ACHN (cell line): ENCODE measurements at regions of chr7 and their contacts with region 1.

Region 1: DNA sequence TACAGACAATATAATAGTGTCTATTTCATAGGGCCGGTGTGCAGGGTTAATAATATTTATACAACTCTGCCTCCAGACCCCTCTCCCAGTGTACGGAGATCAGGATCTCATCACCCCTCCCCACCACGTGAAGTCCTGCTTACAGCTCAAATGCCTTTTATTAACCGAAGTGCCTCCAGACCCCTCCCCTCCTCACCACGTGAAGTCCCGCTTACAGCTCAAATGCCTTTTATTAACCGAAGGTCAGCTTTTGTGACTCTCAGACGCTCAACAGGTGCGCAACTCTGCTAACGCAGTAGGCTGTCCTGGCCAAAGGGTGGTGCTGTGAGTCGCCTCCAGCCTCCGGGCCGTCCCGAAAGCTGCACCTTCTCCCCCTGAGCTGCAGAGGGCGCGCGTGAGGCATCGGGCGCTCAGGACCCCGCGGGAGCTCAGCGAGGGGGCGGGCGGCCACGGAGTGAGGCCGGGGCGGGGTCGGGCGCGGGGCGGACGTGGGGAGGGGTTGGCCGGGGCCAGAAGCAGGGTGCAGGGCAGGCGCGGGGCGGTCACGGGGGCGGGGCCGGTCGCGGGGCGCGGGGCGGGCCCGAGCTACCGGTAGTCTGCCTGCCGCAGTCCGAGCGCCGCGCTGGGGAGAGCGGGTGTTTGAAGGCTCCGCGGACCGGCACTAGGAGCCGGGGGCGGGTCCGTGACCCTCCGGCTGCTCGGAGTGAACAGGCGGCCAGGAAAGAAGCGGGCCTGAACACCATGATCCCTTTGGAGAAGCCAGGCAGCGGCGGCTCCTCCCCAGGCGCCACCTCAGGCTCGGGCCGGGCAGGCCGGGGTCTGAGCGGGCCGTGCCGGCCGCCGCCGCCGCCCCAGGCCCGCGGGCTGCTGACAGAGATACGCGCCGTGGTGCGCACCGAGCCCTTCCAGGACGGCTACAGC is at the start of gene STK17A:
- DNase-seq: peak; percentile 95

Region 2: GRCh38 chr7:43700059-43700501 is 117.3 kb after region 1 on chr7:
- in situ Hi-C with region 1: loop called (anchors 25 kb)
- DNase-seq: peak; percentile 83

Region 3: DNA sequence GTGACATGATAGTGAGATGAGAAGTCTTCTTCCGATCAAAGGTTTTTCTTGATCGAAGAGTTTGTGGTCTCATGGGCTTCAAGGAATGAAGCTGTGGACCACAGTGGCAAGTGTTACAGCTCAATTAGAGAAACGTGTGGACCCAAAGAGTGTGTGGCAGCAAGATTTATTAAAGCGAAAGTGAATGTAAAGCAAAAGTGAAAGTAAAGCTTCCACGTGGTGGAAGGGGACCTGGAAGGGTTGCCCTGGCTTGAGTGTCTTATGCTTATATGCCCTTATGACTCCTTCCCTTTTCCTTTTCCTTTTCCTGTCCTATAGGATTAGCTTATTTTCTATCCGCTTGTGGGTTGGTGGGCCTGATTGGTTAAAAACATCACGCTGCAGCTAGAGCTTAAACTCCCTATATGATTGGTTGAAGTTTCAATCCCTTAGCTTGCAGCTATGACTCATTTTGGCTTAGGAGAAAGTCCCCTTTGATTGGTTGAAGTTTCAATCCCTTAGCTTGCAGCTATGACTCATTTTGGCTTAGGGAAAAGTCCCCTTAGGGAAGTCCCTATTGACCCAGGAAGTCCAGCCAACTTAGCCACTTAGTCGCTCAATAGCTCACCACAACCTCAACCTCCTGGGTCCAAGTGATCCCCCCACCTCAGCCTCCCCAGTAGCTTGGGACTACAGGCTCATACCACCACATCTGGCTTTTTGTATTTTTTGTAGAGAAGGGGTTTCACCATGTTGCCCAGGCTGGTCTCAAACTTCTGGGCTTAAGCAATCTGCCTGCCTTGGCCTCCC is 251.9 kb after region 1 on chr7:
- in situ Hi-C with region 1: loop called (anchors 25 kb)
- DNase-seq: peak; percentile 64